ENCODE measurements at regions of chr14 and their contacts with region 1.

Region 1: GRCh38 chr14:104563742-104564615 is 15.6 kb upstream of the C14orf180 start:
- DNase-seq: peak; percentile 95
- ATAC-seq: peak; percentile 95
- H3K4me3 Mint-ChIP-seq: no peak overlapping the region
- H3K27ac Mint-ChIP-seq: no peak overlapping the region
- H3K4me1 Mint-ChIP-seq: peaks cover 3% of the 10 kb centered on the region; the same call in 1 of the 2 replicates
- H3K27me3 Mint-ChIP-seq: no peaks in the 10 kb centered on the region
- CTCF ChIP-seq: peak; percentile 75

Region 2: GRCh38 chr14:102824832-102825231 is 1739.1 kb before region 1 on chr14:
- CTCF ChIA-PET with region 1: no interaction called
- POLR2A ChIA-PET with region 1: no interaction called
- DNase-seq: no peak
- ATAC-seq: no peak
- H3K4me3 Mint-ChIP-seq: no peak overlapping the region
- H3K27ac Mint-ChIP-seq: no peak overlapping the region
- H3K4me1 Mint-ChIP-seq: peaks cover 59% of the 10 kb centered on the region
- H3K27me3 Mint-ChIP-seq: no peaks in the 10 kb centered on the region
- CTCF ChIP-seq: no peak

Region 3: DNA sequence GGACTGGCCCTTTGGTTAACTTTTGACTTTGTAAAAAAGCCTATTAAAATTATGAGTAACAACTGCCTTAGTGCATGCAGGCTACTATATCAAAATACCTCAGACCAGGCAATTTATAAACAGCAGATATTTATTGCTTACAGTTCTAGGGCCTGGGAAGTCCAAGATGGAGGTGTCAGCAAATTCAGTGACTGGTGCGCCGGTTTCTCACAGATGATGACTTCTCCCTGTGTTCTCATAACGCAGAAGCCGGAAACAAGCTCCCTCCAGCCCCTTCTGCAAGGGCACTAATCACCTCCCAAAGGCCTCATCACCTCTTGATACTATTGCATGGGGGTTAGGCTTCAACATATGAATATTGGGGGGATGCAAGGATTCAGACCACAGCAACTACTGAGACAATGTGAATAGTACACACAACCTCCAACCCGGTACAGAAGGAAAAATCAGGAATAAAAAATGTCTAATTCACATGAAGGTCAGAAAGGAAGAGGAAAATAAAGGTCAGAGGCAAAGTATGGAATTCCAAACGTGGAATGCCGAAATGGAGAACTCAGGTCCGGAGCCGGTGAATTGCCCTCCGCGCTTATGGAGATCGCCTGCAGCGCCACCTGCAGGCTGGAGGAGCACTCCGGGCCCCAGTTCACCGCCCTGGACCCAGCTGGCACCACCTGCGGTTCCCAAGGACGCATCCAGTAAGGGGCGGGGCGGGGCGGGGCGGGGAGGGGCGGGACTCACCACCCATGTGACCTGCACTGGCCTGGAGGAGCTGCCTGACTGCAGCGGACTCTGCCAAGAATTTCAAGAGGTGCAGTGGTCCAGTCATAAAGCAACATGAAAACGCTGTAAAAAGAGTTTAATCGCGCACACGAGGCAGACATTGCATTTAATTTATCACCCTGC is 222.2 kb before region 1 on chr14:
- CTCF ChIA-PET with region 1: interaction called, 10 read pairs
- POLR2A ChIA-PET with region 1: no interaction called
- DNase-seq: peak; percentile 86
- ATAC-seq: peak; percentile 92
- H3K4me3 Mint-ChIP-seq: peak overlapping the region; percentile 39
- H3K27ac Mint-ChIP-seq: no peak overlapping the region
- H3K4me1 Mint-ChIP-seq: peaks cover 9% of the 10 kb centered on the region
- H3K27me3 Mint-ChIP-seq: peaks cover 23% of the 10 kb centered on the region
- CTCF ChIP-seq: peak; percentile 76

Region 4: DNA sequence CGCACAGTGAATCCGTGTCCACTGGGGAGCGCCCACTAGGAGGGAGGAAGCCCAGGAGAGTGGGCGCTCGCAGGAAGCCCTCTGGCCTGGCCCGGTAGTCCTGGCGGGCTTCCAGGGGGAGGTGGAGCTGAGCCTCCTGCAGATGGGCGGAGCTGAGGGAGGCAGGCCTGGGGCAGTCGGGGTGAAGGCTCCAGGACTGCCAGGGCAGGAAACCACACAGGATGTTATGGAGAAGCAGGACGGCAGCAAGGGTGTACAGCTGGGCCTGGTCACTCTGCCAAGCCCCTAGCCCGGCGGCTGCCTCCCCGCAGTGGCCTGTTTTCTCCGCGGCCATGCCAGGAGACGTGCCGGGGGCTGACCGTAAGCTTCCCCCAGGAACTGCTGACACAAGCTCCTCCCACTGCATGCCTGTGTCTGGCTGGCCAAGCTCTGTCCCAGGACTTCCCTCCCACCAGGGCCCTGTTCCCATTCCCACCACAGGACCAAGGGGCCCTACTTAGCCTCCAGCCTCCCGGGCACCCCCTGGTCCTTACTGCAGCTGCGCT is 127.9 kb before region 1 on chr14:
- CTCF ChIA-PET with region 1: interaction called, 10 read pairs
- POLR2A ChIA-PET with region 1: interaction called, 3 read pairs
- DNase-seq: peak; percentile 16
- ATAC-seq: peak; percentile 72
- H3K4me3 Mint-ChIP-seq: no peak overlapping the region
- H3K27ac Mint-ChIP-seq: no peak overlapping the region
- H3K4me1 Mint-ChIP-seq: peaks cover 5% of the 10 kb centered on the region; the same call in 1 of the 2 replicates
- H3K27me3 Mint-ChIP-seq: no peaks in the 10 kb centered on the region
- CTCF ChIP-seq: no peak

Region 5: GRCh38 chr14:104509673-104510072 is 54.3 kb before region 1 on chr14:
- CTCF ChIA-PET with region 1: interaction called, 12 read pairs
- POLR2A ChIA-PET with region 1: no interaction called
- DNase-seq: no peak
- ATAC-seq: peak; percentile 65
- H3K4me3 Mint-ChIP-seq: no peak overlapping the region
- H3K27ac Mint-ChIP-seq: no peak overlapping the region
- H3K4me1 Mint-ChIP-seq: peaks cover 2% of the 10 kb centered on the region
- H3K27me3 Mint-ChIP-seq: no peaks in the 10 kb centered on the region; the same call in 1 of the 2 replicates
- CTCF ChIP-seq: no peak

Region 6: DNA sequence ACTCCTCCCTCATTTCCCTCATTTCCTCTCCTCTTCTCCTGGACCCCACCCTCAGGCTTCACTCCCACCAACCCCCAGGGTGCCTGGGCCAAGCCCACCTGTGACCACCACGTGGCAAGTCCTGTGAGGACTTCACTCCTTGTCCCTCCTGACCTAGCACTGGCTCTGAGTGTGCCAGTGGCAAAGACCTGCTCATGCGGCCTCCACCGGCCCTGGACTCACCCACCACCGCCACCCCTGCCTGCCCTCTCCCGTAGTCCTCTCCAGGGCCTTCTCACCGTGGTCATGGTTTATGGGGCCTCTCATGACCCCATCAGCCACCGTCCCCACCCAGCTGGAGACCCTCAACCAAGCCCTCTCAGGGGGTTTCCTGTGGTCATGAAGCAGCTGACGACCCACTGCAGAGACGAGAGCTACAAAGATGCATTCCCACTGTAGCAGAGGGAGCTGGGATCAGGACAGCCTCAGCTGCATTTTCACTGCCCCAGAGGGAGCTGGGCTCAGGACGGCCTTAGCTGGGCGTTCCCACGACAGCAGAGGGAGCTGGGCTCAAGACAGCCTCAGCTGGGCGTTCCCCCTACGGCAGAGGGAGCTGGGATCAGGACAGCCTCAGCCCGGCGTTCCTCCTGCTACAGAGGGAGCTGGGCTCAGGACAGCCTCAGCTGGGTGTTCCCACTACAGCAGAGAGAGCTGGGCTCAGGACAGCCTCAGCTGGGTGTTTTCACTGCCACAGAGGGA is 12.4 kb after region 1 on chr14:
- CTCF ChIA-PET with region 1: interaction called, 20 read pairs
- POLR2A ChIA-PET with region 1: no interaction called
- DNase-seq: no peak
- ATAC-seq: no peak
- H3K4me3 Mint-ChIP-seq: no peak overlapping the region
- H3K27ac Mint-ChIP-seq: no peak overlapping the region
- H3K4me1 Mint-ChIP-seq: no peaks in the 10 kb centered on the region
- H3K27me3 Mint-ChIP-seq: no peaks in the 10 kb centered on the region
- CTCF ChIP-seq: no peak